ENCODE measurements at regions of chrX and their contacts with region 1.

Region 1: DNA sequence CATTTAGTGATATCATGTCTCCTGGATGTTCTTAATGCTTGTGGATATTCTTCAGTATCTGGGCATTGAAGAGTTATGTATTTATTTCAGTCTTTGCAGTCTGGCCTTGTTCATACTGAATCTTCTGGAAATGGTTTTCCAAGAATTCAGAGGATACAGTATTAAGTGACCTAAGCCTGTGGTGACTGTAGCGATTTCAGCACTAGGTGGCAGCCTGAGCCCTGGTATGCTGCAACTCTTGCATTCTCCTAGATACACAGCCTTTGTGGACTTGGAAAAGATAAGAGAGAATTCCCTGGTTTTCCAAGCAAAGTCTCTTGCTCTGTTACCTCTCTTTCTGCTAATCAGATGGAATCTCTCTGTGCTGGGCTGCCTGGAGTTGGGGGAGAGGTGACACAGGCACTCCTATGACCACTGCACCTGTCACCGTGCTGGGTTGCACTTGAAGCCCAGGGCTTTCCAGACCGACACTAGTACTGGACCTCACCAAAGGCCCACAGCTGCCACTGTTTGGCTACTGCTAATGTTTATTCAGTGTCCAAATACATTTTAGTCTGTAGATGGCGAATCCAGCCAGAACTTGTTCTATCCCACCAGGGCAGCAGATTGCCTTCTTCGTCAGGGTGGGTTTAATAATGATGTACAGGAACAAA is 19.3 kb upstream of the SPIN2A start:
- DNase-seq: no peak

Region 2: GRCh38 chrX:57119416-57119815 is 37.1 kb before region 1 on chrX:
- intact Hi-C with region 1: no loop called
- DNase-seq: no peak

Region 3: DNA sequence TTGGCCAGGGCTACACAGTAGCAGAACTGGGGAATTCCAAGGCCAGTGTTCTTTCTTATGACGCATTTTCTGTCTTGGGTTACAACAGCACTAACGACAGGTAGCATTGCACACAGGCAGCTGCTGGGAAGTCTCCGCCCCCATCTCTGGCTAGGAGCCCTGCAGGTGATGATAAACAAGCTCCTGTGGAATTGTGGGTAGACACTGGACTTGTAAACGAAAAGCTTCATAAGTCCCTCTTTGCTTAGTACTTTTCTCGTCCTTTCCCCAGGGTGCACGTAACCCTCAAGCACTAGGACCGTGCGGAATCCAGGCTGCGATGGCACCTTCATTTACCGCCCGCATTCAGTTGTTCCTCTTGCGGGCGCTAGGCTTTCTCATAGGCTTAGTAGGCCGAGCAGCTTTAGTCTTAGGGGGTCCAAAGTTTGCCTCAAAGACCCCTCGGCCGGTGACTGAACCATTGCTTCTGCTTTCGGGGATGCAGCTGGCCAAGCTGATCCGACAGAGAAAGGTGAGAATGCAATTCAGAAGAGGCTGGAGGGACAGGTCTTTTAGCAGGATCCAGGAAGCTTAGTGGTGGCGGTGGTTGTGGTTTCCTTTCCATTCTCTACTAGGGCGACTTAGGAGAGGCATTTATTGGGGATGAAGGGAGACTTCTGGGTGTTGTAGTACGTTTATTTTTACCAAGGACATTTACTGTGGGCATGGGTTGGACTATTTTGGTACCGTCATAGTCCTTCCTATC is 130.2 kb after region 1 on chrX and contains the start of gene FAAH2:
- intact Hi-C with region 1: no loop called
- DNase-seq: no peak
- total RNA-seq, gene FAAH2: 0.19 TPM

Region 4: GRCh38 chrX:57453901-57454300 is 297.4 kb after region 1 on chrX:
- intact Hi-C with region 1: loop called (anchors 5 kb)
- DNase-seq: no peak